ENCODE measurements at regions of chr16 and their contacts with region 1.

Region 1: GRCh38 chr16:57627184-57627871 is 1.1 kb upstream of the ADGRG1 start:
- DNase-seq: peak; percentile 85
- ATAC-seq: peak; percentile 60
- H3K4me3 ChIP-seq: no peak overlapping the region
- H3K27ac ChIP-seq: peak overlapping the region; percentile 58; the same call in 1 of the 2 replicates
- H3K4me1 ChIP-seq: peaks cover 29% of the 10 kb centered on the region
- H3K27me3 ChIP-seq: no peaks in the 10 kb centered on the region
- CTCF ChIP-seq: peak; percentile 54
- POLR2A ChIP-seq: peak; percentile 21; the same call in 1 of the 2 replicates
- RAD21 ChIP-seq: peak; percentile 41

Region 2: DNA sequence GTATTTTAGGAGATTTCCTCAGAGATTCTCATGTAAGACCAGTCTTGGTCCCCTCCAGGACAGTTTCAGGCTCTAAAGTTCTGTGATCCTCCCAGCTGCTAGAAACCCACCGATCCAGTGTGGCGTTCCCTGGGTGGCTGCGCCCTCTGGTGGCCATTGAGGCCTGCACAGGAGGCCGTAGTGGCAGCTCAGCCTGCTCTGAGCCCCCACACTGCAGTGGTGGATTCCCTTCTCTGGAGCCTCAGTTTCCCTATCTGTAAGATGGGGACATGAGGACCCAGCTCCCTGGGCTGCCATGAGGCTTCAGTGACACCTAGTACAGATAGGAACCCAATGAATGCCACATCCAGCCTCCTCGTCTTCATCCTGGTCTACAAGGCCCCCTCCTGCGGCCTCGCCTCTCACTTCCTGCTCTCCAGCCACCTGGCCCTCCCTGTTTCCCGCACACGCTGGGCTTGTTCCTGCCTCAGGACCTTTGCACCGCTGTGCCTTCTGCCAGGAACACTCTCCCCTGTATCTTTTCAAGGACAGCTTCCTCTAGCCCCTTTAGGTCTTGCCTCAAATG is 107.5 kb before region 1 on chr16:
- CTCF ChIA-PET with region 1: no interaction called
- POLR2A ChIA-PET with region 1: no interaction called
- dilution Hi-C with region 1: no loop called
- in situ Hi-C with region 1: no loop called
- intact Hi-C with region 1: no loop called
- DNase-seq: peak; percentile 52
- ATAC-seq: peak; percentile 96
- H3K4me3 ChIP-seq: no peak overlapping the region
- H3K27ac ChIP-seq: no peak overlapping the region
- H3K4me1 ChIP-seq: no peaks in the 10 kb centered on the region; the same call in 1 of the 2 replicates
- H3K27me3 ChIP-seq: no peaks in the 10 kb centered on the region
- CTCF ChIP-seq: peak; percentile 90
- POLR2A ChIP-seq: no peak
- RAD21 ChIP-seq: peak; percentile 88

Region 3: GRCh38 chr16:57611184-57611583 is 16.1 kb before region 1 on chr16:
- CTCF ChIA-PET with region 1: interaction called, 8 read pairs
- POLR2A ChIA-PET with region 1: no interaction called
- dilution Hi-C with region 1: no loop called
- in situ Hi-C with region 1: no loop called
- intact Hi-C with region 1: loop called (anchors 1 kb)
- DNase-seq: peak; percentile 81
- ATAC-seq: peak; percentile 68
- H3K4me3 ChIP-seq: no peak overlapping the region
- H3K27ac ChIP-seq: peak overlapping the region; percentile 20
- H3K4me1 ChIP-seq: peaks cover 19% of the 10 kb centered on the region
- H3K27me3 ChIP-seq: no peaks in the 10 kb centered on the region
- CTCF ChIP-seq: no peak
- POLR2A ChIP-seq: no peak
- RAD21 ChIP-seq: no peak

Region 4: DNA sequence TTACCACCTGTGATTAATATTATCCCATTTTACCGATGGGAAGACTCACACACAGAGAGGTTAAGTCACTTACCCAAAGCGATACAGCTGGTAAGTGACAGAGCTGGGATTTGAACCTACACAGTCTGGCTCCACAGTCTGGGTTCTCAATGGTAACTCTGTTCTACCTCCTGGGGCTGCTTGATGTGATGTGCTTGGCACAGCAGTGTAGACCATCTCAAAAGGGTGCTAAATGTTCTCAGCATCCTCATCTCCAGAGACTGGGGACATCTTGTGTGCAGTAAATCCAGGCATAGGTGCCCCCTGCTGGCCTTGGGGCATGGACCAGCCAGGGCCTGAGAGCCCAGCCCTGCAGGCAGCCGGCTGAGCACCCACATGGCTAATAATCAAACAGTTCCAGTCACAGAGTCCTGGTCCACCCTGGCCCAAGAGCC is 92.8 kb after region 1 on chr16:
- CTCF ChIA-PET with region 1: no interaction called
- POLR2A ChIA-PET with region 1: no interaction called
- dilution Hi-C with region 1: no loop called
- in situ Hi-C with region 1: no loop called
- intact Hi-C with region 1: no loop called
- DNase-seq: peak; percentile 50
- ATAC-seq: peak; percentile 97
- H3K4me3 ChIP-seq: no peak overlapping the region
- H3K27ac ChIP-seq: no peak overlapping the region
- H3K4me1 ChIP-seq: no peaks in the 10 kb centered on the region
- H3K27me3 ChIP-seq: peaks cover 32% of the 10 kb centered on the region
- CTCF ChIP-seq: peak; percentile 67
- POLR2A ChIP-seq: no peak
- RAD21 ChIP-seq: peak; percentile 62

Region 5: GRCh38 chr16:58222532-58223316 is 595.4 kb after region 1 on chr16:
- CTCF ChIA-PET with region 1: no interaction called
- POLR2A ChIA-PET with region 1: no interaction called
- dilution Hi-C with region 1: no loop called
- in situ Hi-C with region 1: no loop called
- intact Hi-C with region 1: no loop called
- DNase-seq: peak; percentile 25
- ATAC-seq: peak; percentile 76
- H3K4me3 ChIP-seq: no peak overlapping the region
- H3K27ac ChIP-seq: no peak overlapping the region
- H3K4me1 ChIP-seq: no peaks in the 10 kb centered on the region
- H3K27me3 ChIP-seq: peaks cover 7% of the 10 kb centered on the region
- CTCF ChIP-seq: no peak
- POLR2A ChIP-seq: no peak
- RAD21 ChIP-seq: no peak

Measured in IMR-90 (cell line).